Psoas muscle (tissue), 8 donors: ENCODE measurements at regions of chr7 and their contacts with region 1.

Region 1: GRCh38 chr7:128027485-128027980 is 3.7 kb downstream of the LRRC4 start:
- DNase-seq: no peak
- ATAC-seq: no peak
- H3K4me3 ChIP-seq: no peak overlapping the region
- H3K27ac ChIP-seq: no peak overlapping the region
- H3K4me1 ChIP-seq: peaks cover 6% of the 10 kb centered on the region
- H3K27me3 ChIP-seq: peaks cover 0 to 8% (median 0%) of the 10 kb centered on the region in 3 donors
- CTCF ChIP-seq: no peak

Region 2: GRCh38 chr7:127708788-127709187 is 318.7 kb before region 1 on chr7:
- intact Hi-C with region 1: loop called in 1 of 2 experiments (anchors 5 kb)
- DNase-seq: peak; percentile 38 to 58
- ATAC-seq: peak; percentile 66 to 93 (median 84)
- H3K4me3 ChIP-seq: no peak overlapping the region
- H3K27ac ChIP-seq: no peak overlapping the region
- H3K4me1 ChIP-seq: no peaks in the 10 kb centered on the region
- H3K27me3 ChIP-seq: no peaks in the 10 kb centered on the region
- CTCF ChIP-seq: peak; percentile 82